ENCODE measurements at regions of chr17 and their contacts with region 1.

Region 1: GRCh38 chr17:32461853-32462617 is 17.7 kb downstream of the PSMD11 start:
- DNase-seq: peak; percentile 83
- ATAC-seq: peak; percentile 86
- H3K4me3 Mint-ChIP-seq: no peak overlapping the region
- H3K27ac Mint-ChIP-seq: no peak overlapping the region
- H3K4me1 Mint-ChIP-seq: peaks cover 26% of the 10 kb centered on the region
- H3K27me3 Mint-ChIP-seq: no peaks in the 10 kb centered on the region

Region 2: GRCh38 chr17:32444308-32445073 is 17.5 kb before region 1 on chr17 and contains the start of gene PSMD11:
- CTCF ChIA-PET with region 1: interaction called, 102 read pairs
- POLR2A ChIA-PET with region 1: interaction called, 4 read pairs
- DNase-seq: peak; percentile 99
- ATAC-seq: peak; percentile 98
- H3K4me3 Mint-ChIP-seq: peak within 1 kb of the TSS; percentile 82
- H3K27ac Mint-ChIP-seq: peak within 1 kb of the TSS; percentile 77
- H3K4me1 Mint-ChIP-seq: peaks cover 38% of the 10 kb centered on the region
- H3K27me3 Mint-ChIP-seq: peaks cover 17% of the 10 kb centered on the region
- total RNA-seq, gene PSMD11: 100 to 104 TPM

Region 3: GRCh38 chr17:32508926-32509325 is 46.9 kb after region 1 on chr17:
- CTCF ChIA-PET with region 1: interaction called, 10 read pairs
- POLR2A ChIA-PET with region 1: no interaction called
- DNase-seq: no peak
- ATAC-seq: no peak
- H3K4me3 Mint-ChIP-seq: no peak overlapping the region
- H3K27ac Mint-ChIP-seq: no peak overlapping the region
- H3K4me1 Mint-ChIP-seq: peaks cover 30% of the 10 kb centered on the region
- H3K27me3 Mint-ChIP-seq: no peaks in the 10 kb centered on the region

Region 4: GRCh38 chr17:32590974-32591373 is 128.9 kb after region 1 on chr17:
- CTCF ChIA-PET with region 1: interaction called, 22 read pairs
- POLR2A ChIA-PET with region 1: no interaction called
- DNase-seq: no peak
- ATAC-seq: no peak
- H3K4me3 Mint-ChIP-seq: no peak overlapping the region
- H3K27ac Mint-ChIP-seq: no peak overlapping the region
- H3K4me1 Mint-ChIP-seq: peaks cover 5% of the 10 kb centered on the region
- H3K27me3 Mint-ChIP-seq: peaks cover 3% of the 10 kb centered on the region

Region 5: DNA sequence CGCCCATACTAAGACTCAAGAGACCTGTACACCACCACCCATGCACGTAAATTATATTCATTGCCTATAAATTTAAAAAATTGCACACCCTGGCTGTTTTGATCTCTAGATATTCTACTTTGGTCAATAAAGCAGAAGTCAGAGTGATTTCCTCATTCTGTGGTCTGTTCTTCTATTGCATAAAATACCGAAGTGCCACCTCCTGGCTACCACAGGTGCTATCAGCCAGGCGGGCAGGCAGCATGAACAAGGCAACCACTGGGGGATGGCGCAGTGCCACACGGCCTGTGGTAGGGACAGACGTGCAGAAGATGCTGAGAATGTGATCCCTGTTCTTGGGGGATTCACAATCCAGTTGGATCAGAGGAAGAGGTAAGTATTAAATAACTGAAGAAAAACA is 147.1 kb after region 1 on chr17:
- CTCF ChIA-PET with region 1: interaction called, 23 read pairs
- POLR2A ChIA-PET with region 1: no interaction called
- DNase-seq: peak; percentile 83
- ATAC-seq: peak; percentile 100
- H3K4me3 Mint-ChIP-seq: no peak overlapping the region
- H3K27ac Mint-ChIP-seq: no peak overlapping the region
- H3K4me1 Mint-ChIP-seq: peaks cover 8% of the 10 kb centered on the region
- H3K27me3 Mint-ChIP-seq: no peaks in the 10 kb centered on the region

Region 6: DNA sequence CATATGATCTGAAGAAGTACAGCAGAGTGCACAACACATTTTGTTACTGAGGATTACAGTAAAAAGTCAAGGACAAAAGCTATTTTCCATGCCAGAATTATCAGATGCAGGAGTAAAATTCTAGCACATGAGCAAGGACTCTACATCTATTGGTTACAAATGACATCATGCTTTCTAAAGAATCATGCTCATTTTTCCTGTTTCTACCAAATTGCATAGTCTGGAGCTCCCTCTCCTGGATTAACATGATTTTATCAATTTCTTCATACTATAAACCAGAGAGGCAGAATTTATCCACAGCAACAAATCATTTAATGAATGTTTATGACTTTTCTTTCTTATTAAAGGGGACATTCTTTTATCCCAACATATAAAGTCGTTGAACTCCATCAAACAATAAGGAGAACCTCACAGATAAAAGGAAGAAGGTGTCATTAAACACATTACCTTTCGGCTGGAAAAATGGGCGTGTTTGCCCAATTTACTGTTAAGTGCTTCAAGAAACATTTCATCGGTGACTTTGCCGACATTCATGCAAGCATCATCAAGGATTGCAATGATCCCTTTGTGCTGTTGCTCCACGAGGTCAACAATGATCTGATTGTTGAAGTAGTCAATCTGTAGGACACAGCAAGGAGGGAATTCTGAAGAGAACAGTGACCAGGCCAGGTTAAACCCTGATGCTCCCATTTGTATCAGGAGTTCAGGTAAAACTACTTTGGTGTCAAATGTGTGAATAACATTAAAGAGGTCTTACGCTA is 293.2 kb after region 1 on chr17:
- CTCF ChIA-PET with region 1: interaction called, 20 read pairs
- POLR2A ChIA-PET with region 1: no interaction called
- DNase-seq: no peak
- ATAC-seq: peak; percentile 61
- H3K4me3 Mint-ChIP-seq: no peak overlapping the region
- H3K27ac Mint-ChIP-seq: no peak overlapping the region
- H3K4me1 Mint-ChIP-seq: peaks cover 9% of the 10 kb centered on the region
- H3K27me3 Mint-ChIP-seq: no peaks in the 10 kb centered on the region

Measured in activated CD8-positive, alpha-beta T cell treated with anti-CD3 and anti-CD28 coated beads, Interleukin-2, amount 10 ng/mL, durations not matched to agents 7 days and 5 days (primary cell).